ENCODE measurements at regions of chr13 and their contacts with region 1.

Region 1: GRCh38 chr13:44484562-44485138 is 91.5 kb downstream of the TSC22D1 start:
- DNase-seq: no peak
- ATAC-seq: no peak
- H3K4me3 ChIP-seq: peak overlapping the region in 7 of 12 donors; percentile 7 to 24 (median 18)
- H3K27ac ChIP-seq: peak overlapping the region in 2 of 12 donors; percentile 7 to 9
- H3K4me1 ChIP-seq: peaks cover 0 to 20% (median 9%) of the 10 kb centered on the region in 12 donors
- H3K27me3 ChIP-seq: no peaks in the 10 kb centered on the region
- CTCF ChIP-seq: no peak
- POLR2A ChIP-seq: no peak

Region 2: DNA sequence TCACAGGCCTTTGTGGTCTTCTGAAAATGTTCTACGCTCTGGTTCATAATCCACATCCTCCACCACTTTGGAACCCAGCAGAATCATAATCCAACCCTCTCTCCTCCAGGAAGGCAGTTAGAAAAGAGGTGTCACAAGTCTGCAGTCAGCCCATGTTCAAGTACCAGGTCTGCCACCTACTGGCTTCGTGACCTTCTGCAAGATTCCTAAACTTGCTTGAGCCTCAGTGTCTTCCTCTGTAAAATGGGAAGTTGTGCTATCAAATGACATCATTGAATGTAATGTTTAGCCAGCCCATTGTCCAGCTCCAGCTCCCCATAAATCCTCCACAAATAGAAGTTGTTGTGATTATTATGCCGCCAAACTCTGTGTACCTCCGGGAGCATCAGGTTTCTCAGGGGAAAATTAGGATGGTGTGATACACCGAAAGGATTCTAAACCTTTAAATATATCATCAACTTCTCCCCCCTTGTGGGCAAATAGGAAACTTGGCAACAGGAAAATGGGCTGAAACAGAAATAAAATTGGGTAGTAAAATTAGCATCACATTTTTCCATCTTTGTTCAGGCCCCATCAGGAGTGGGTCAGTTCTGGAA is 394.9 kb after region 1 on chr13:
- intact Hi-C with region 1: loop called in 8 of 10 experiments (anchors 2 to 10 kb)
- DNase-seq: no peak
- ATAC-seq: peak in 1 of 4 donors; percentile 45
- H3K4me3 ChIP-seq: no peak overlapping the region
- H3K27ac ChIP-seq: no peak overlapping the region
- H3K4me1 ChIP-seq: no peaks in the 10 kb centered on the region
- H3K27me3 ChIP-seq: no peaks in the 10 kb centered on the region
- CTCF ChIP-seq: peak in 11 of 12 donors; percentile 16 to 52 (median 35)
- POLR2A ChIP-seq: no peak

Measured in heart left ventricle (tissue), 16 donors.